HepG2 (cell line): ENCODE measurements at regions of chr22 and their contacts with region 1.

Region 1: GRCh38 chr22:20524004-20524481 is 16.6 kb downstream of the MED15 start:
- DNase-seq: peak; percentile 85
- ATAC-seq: peak; percentile 79
- H3K4me3 ChIP-seq: no peak overlapping the region; a peak in 1 of 6 replicates
- H3K27ac ChIP-seq: peak overlapping the region; percentile 63
- H3K4me1 ChIP-seq: peaks cover 37% of the 10 kb centered on the region
- H3K27me3 ChIP-seq: no peaks in the 10 kb centered on the region
- CTCF ChIP-seq: no peak
- EP300 ChIP-seq: peak in 1 of 2 experiments; percentile 40; a peak in 1 of 4 replicates
- POLR2A ChIP-seq: no peak
- RAD21 ChIP-seq: no peak

Region 2: DNA sequence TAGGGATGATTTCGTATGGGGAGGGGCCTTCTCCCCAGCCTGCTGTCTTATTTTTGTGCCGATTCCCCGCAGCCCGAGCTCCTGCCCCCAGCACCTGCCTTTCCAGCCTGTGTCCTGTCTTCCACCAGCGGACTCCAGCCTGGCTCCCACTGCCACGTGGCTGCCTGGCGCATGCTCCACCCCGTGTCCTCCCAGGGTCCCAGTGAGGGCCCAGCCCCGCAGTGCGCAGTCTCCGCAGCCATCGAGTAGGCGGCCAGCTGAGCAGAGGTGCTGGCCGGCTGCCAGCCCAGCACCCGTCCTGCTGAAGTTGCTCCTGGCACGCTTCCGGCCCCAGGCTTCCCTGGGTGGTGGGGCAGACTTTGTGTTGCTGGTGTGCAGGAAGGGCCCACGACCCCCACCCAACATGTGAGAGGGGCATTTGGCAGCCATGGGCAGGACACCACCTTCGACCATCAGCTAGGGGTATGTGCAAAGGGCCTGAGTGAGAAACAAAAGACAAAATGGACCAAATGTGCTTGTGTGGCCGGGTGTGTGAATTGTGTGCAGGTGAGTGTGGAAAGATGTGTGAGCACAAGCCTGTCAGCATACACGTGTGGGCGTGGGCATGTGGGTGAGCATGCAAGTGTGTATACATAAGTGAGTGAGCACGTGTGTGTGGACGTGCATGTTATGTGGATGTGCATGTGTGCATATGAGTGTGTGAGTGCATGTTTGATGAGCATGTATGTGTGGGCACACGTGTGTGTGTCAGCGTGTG is 311.9 kb before region 1 on chr22:
- CTCF ChIA-PET with region 1: no interaction called
- POLR2A ChIA-PET with region 1: no interaction called
- in situ Hi-C with region 1: no loop called
- intact Hi-C with region 1: no loop called
- DNase-seq: no peak
- ATAC-seq: no peak
- H3K4me3 ChIP-seq: no peak overlapping the region
- H3K27ac ChIP-seq: no peak overlapping the region
- H3K4me1 ChIP-seq: no peaks in the 10 kb centered on the region
- H3K27me3 ChIP-seq: peaks cover 27 to 82% of the 10 kb centered on the region in 2 experiments; a peak in 4 of 5 replicates
- CTCF ChIP-seq: no peak
- EP300 ChIP-seq: no peak
- POLR2A ChIP-seq: no peak
- RAD21 ChIP-seq: no peak

Region 3: GRCh38 chr22:20565079-20565734 is 41.2 kb after region 1 on chr22:
- CTCF ChIA-PET with region 1: interaction called, 3 read pairs
- POLR2A ChIA-PET with region 1: no interaction called
- in situ Hi-C with region 1: no loop called
- intact Hi-C with region 1: loop called (anchors 1 kb)
- DNase-seq: no peak
- ATAC-seq: no peak
- H3K4me3 ChIP-seq: no peak overlapping the region
- H3K27ac ChIP-seq: no peak overlapping the region
- H3K4me1 ChIP-seq: no peaks in the 10 kb centered on the region
- H3K27me3 ChIP-seq: no peaks in the 10 kb centered on the region
- CTCF ChIP-seq: no peak
- EP300 ChIP-seq: no peak
- POLR2A ChIP-seq: no peak
- RAD21 ChIP-seq: no peak